HEK293 (cell line): ENCODE measurements at regions of chr1 and their contacts with region 1.

Region 1: GRCh38 chr1:226201029-226201593 is 14.6 kb upstream of the ACBD3 start:
- H3K4me3 ChIP-seq: no peak overlapping the region
- H3K27ac ChIP-seq: no peak overlapping the region
- H3K4me1 ChIP-seq: no peaks in the 10 kb centered on the region
- CTCF ChIP-seq: peak; percentile 14; the same call in 1 of the 2 replicates

Region 2: GRCh38 chr1:226157761-226158316 is 43.3 kb before region 1 on chr1:
- CTCF ChIA-PET with region 1: interaction called, 12 read pairs
- POLR2A ChIA-PET with region 1: no interaction called
- H3K4me3 ChIP-seq: no peak overlapping the region
- H3K27ac ChIP-seq: no peak overlapping the region
- H3K4me1 ChIP-seq: no peaks in the 10 kb centered on the region
- CTCF ChIP-seq: no peak

Region 3: DNA sequence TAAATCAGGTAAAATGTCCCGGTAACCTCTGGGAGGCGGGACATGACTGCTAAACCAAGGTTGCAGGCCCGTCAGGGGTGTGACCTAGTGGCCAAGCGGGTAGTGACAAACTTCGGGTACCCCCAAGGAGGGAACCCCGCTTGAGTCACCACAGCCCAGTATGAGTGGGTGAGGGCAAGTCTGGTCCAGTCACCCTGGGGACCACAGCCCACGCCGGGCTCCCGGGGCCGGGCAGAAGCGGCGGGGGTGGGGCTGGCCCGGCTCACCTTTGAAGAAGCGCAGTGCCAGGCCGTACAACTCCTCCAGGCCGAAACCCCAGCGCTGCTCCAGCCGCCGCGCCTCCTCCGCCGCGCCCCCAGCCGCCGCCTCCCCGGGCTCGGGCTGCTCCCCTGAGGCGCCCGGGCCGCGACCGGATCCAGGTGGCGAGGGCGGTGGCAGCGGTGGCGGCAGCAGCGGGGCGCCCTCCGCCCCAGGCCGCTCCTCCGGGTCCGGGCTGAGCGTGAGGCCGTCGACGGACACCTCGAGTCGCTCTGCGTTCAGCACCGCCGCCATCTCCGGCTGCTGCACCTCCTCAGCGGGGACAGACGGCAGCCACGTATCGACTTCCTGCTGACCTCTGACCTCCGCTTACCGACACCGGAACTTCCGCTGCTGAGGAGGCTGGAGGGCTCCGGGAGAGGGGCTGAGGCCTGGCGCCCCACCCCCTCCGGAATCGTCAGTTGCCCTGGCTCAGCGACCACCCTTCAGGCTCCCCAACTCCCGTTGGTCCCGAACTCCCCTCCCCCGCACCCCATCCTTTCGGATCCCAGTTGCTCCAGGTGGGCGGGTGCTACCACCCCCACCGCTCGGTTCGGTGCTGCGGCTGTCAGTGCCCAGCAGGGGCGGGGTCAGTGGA is 14.7 kb before region 1 on chr1 and contains the start of gene ACBD3:
- CTCF ChIA-PET with region 1: interaction called, 26 read pairs
- POLR2A ChIA-PET with region 1: interaction called, 4 read pairs
- H3K4me3 ChIP-seq: peak within 1 kb of the TSS; percentile 74
- H3K27ac ChIP-seq: peak within 1 kb of the TSS; percentile 93
- H3K4me1 ChIP-seq: peaks cover 13% of the 10 kb centered on the region
- CTCF ChIP-seq: peak; percentile 82

Region 4: GRCh38 chr1:226236826-226237225 is 35.7 kb after region 1 on chr1:
- CTCF ChIA-PET with region 1: interaction called, 10 read pairs
- POLR2A ChIA-PET with region 1: no interaction called
- H3K4me3 ChIP-seq: no peak overlapping the region
- H3K27ac ChIP-seq: no peak overlapping the region
- H3K4me1 ChIP-seq: no peaks in the 10 kb centered on the region
- CTCF ChIP-seq: no peak

Region 5: DNA sequence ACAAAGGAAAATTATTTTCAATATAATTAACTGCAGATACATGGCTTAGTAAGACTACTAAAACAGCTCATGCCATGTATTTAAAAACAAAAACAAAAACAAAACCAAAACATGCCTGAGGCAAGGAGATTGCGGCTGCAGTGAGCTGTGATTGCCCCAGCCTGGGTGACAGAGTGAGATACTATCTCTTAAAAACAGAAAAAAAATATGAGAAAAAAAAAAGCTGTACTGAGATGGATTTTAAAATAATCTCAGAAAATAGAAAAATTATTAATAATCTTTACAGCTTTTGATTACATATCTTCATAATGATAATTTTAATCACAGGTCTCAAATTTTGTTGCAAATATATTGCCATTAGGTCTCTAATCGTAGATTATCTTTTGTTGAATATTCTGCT is 131.8 kb after region 1 on chr1:
- CTCF ChIA-PET with region 1: interaction called, 26 read pairs
- POLR2A ChIA-PET with region 1: no interaction called
- H3K4me3 ChIP-seq: peak overlapping the region; percentile 25; the same call in 1 of the 2 replicates
- H3K27ac ChIP-seq: no peak overlapping the region
- H3K4me1 ChIP-seq: peaks cover 3% of the 10 kb centered on the region; the same call in 1 of the 2 replicates
- CTCF ChIP-seq: no peak

Region 6: DNA sequence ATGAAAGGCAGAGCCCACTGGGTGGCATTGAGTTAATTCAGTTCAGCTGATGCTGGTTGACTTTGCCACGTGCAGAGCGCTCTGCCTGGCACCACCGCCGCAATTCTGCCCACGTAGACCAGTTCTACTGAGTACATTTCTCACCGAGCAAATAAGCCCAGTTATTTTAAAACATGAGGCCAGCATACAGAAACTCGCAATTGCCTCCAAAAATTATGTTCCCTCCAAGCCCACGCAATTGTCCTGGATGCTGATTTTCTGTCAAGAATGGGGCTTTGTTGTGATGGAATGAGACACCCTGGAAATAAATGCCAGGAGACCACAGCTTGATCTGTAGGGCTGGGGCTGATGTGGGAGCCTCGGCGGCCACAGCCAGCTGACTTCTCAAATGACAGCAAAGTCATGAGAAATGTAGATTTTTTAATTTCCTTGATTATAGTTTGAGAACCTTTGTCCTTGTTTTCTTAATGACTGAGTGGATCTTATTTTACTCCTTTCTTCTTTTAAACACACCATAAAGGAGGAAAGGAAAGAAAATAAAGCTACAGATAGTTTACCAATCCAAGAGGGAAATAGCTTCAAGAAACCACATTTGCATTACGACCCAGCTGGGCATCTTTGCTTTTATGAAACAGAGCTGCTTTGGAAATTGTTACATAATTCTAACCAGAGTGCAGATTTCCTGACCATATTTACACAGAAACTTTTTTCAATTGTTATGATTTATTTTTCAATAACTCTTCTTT is 218.3 kb after region 1 on chr1:
- CTCF ChIA-PET with region 1: no interaction called
- POLR2A ChIA-PET with region 1: no interaction called
- H3K4me3 ChIP-seq: no peak overlapping the region
- H3K27ac ChIP-seq: no peak overlapping the region
- H3K4me1 ChIP-seq: no peaks in the 10 kb centered on the region
- CTCF ChIP-seq: no peak